ENCODE measurements at regions of chr6 and their contacts with region 1.

Region 1: DNA sequence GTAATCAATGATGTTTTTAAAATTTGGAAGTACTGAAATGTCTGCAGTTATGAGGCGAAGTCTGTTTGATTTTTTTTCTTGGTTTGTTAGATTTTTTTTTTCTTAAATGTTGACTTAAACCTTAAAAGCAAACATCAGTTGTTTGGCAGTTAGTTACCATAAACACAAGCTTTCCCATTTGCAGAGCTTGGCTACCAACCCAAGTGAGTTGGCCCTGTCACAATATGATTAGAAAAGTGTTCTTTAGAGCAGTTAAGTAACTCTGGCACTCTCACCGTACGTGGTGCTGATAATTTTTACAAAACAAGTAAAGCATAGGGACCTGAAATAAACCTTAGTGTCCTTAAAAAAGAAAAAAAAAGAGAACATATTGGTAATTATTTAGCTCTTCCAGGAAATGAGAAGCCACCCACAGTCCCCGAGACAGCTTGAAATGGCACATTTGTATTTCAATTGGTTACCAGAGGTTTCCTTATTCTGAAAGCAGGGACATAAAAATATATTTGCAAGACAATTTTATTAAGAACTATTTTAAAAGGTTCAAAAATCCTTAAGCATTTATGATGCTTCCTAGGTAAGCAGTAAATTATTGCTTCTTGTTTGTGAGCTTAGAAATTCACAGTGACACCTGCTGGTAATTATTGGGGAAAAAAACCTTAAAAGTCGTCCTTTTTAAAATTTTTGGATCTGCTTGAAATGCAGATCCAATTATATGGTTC is 3.9 kb downstream of the HEY2 start:
- DNase-seq: no peak
- CTCF ChIP-seq: no peak

Region 2: DNA sequence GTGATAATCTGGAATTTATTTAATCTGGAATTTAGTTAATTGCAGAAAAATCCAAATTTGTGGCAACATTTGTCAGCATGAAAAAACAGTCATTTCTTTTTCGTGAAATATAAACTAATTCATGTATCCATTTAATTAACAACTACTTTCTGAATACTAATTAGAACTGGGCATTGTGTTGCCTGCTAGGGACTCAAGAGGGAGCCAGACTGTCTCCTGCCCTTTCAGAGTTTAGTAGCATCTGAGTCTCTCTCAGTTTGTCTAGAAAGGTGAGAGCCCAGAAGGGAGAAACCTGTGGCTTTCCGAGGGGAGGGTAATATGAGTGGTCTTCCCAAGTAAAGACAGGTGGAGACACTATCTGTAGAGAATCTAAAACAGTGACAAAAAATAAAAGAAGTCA is 240.8 kb before region 1 on chr6:
- in situ Hi-C with region 1: loop called (anchors 25 kb)
- DNase-seq: no peak
- CTCF ChIP-seq: peak; percentile 54

Region 3: DNA sequence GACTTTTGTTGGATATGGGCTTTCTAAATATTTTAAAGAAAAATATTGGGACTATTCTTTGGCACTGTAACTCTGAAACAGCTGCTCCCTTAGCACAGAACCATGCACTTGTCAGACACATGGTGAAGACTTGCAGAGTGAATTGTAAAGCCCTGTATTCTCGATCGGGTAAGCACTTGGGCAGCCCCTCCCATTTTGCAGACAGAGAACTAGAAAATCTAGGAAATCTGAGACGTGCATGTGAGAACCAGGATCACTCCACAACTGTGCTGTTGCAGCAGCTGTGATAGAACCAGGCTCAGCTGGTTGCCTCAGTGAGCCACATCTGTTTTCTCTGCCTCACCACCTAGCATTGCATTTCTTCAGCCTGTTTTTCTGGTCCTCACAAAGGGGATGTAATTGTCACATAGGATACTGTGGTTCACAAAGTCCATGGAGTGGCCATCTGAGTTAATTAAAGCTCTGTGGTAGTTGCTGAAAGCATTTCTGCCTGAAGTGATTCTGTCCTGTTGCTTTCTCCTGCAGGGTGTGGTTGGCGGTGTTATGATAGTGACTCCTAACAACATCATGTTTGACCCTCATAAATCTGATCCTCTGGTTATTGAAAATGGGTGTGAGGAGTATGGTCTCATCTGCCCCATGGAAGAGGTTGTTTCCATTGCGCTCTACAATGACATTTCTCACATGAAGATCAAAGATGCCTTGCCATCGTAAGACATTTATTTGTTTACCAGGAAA is 131.4 kb after region 1 on chr6:
- in situ Hi-C with region 1: no loop called
- DNase-seq: no peak
- CTCF ChIP-seq: no peak